CD14-positive monocyte (primary cell): ENCODE measurements at regions of chr2 and their contacts with region 1.

Region 1: DNA sequence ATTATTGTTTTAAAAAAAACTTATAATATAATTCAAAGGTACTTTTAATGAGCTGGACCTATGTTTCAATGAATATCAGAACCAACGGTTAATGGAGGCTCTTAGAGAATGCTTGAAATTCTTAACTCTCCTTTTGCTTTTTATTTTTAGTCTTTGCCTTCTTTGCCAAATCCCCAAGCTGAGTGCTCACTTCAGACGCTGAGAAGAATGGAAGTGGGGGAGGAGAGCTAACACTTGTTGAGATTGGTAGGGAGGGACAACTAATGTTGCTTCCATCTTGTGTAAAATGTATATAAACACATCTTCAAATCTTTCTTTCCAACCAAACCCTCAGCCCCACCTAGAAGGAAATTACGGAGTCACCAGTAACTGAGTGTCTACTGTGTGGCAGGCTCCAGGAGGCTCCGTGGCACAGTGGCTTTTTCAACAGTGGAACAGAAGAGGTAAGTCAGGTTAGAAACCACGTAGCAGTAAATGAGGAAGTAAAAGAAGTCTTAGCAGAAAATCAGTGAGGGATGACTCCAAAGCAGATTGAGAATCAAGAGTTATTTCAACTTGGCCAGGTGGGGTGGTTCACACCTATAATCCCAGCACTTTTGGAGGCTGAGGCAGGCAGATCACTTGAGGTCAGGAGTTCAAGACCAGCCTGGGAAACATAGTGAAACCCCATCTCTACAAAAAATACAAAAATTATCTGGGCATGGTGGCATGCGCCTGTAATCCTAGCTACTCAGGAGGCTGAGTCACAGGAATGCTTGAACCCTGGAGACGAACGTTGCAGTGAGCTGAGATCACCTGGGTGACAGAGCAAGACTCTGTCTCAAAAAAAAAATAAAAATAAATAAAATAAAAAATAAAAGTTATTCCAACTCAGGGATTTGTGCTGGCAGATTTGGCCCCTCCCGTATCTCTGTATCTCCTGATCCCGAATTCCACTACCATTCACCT is 45.0 kb upstream of the CREB1 start:
- DNase-seq: no peak
- H3K4me3 ChIP-seq: no peak overlapping the region
- H3K4me3 Mint-ChIP-seq: no peak overlapping the region
- H3K27ac ChIP-seq: no peak overlapping the region
- H3K27ac Mint-ChIP-seq: peak overlapping the region in 5 of 7 donors; percentile 0 to 72 (median 28)
- H3K4me1 ChIP-seq: peaks cover 17 to 21% of the 10 kb centered on the region in 2 donors
- H3K4me1 Mint-ChIP-seq: peaks cover 24% of the 10 kb centered on the region
- H3K27me3 ChIP-seq: no peaks in the 10 kb centered on the region
- H3K27me3 Mint-ChIP-seq: peaks cover 0 to 2% (median 0%) of the 10 kb centered on the region in 3 donors
- CTCF ChIP-seq: no peak

Region 2: GRCh38 chr2:207448006-207448405 is 36.7 kb before region 1 on chr2:
- intact Hi-C with region 1: no loop called
- DNase-seq: no peak
- H3K4me3 ChIP-seq: no peak overlapping the region
- H3K4me3 Mint-ChIP-seq: no peak overlapping the region
- H3K27ac ChIP-seq: no peak overlapping the region
- H3K27ac Mint-ChIP-seq: no peak overlapping the region
- H3K4me1 ChIP-seq: no peaks in the 10 kb centered on the region
- H3K4me1 Mint-ChIP-seq: no peaks in the 10 kb centered on the region
- H3K27me3 ChIP-seq: no peaks in the 10 kb centered on the region
- H3K27me3 Mint-ChIP-seq: peaks cover 0 to 3% (median 0%) of the 10 kb centered on the region in 3 donors
- CTCF ChIP-seq: no peak

Region 3: GRCh38 chr2:207529330-207530159 is 44.8 kb after region 1 on chr2 and contains the start of gene CREB1:
- intact Hi-C with region 1: loop called (anchors 5 kb)
- DNase-seq: peak; percentile 99 to 100 (median 100)
- H3K4me3 ChIP-seq: peak within 1 kb of the TSS; percentile 81 to 99 (median 96)
- H3K4me3 Mint-ChIP-seq: peak within 1 kb of the TSS; percentile 92 to 99
- H3K27ac ChIP-seq: peak within 1 kb of the TSS; percentile 96 to 100
- H3K27ac Mint-ChIP-seq: peak within 1 kb of the TSS; percentile 99 to 100 (median 100)
- H3K4me1 ChIP-seq: peaks cover 49 to 63% of the 10 kb centered on the region in 2 donors
- H3K4me1 Mint-ChIP-seq: peaks cover 64% of the 10 kb centered on the region
- H3K27me3 ChIP-seq: no peaks in the 10 kb centered on the region
- H3K27me3 Mint-ChIP-seq: peaks cover 0 to 10% (median 0%) of the 10 kb centered on the region in 3 donors
- CTCF ChIP-seq: no peak
- polyA plus RNA-seq, gene CREB1: 43.3 to 60.5 (median 55.2) TPM